ENCODE measurements at regions of chr6 and their contacts with region 1.

Region 1: GRCh38 chr6:11366183-11366933 is 133.9 kb upstream of the NEDD9 start:
- DNase-seq: no peak
- H3K4me3 ChIP-seq: no peak overlapping the region
- H3K27ac ChIP-seq: peak overlapping the region; percentile 74 to 80
- H3K4me1 ChIP-seq: no peaks in the 10 kb centered on the region
- H3K27me3 ChIP-seq: no peaks in the 10 kb centered on the region
- CTCF ChIP-seq: no peak
- POLR2A ChIP-seq: no peak

Region 2: GRCh38 chr6:11033825-11034224 is 332.5 kb before region 1 on chr6:
- intact Hi-C with region 1: no loop called
- DNase-seq: no peak
- H3K4me3 ChIP-seq: no peak overlapping the region
- H3K27ac ChIP-seq: no peak overlapping the region
- H3K4me1 ChIP-seq: no peaks in the 10 kb centered on the region
- H3K27me3 ChIP-seq: no peaks in the 10 kb centered on the region
- CTCF ChIP-seq: no peak
- POLR2A ChIP-seq: no peak

Region 3: DNA sequence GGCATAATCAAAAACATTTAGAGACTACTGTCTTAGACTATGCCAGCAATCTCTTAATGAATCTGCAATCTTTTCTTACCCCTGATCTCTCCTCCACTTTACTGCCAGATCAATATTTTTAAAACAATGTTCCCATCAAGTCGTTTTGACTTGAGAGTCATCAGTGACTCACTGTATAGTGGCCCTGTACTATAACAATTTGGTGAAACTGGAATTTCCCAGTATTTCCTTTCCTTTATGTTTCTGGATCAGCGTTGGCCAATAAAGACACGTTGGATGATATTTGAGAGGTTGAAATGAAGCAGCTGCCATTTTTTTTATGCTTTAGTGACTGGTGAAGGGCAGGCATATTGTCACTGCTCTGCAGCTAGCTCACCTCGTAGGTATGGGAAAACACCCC is 282.9 kb before region 1 on chr6:
- intact Hi-C with region 1: no loop called
- DNase-seq: no peak
- H3K4me3 ChIP-seq: no peak overlapping the region
- H3K27ac ChIP-seq: no peak overlapping the region
- H3K4me1 ChIP-seq: no peaks in the 10 kb centered on the region
- H3K27me3 ChIP-seq: no peaks in the 10 kb centered on the region
- CTCF ChIP-seq: no peak
- POLR2A ChIP-seq: no peak

Region 4: GRCh38 chr6:11232193-11232769 is 134.1 kb before region 1 on chr6 and contains the start of gene NEDD9:
- intact Hi-C with region 1: loop called (anchors 5 kb)
- DNase-seq: peak; percentile 99
- H3K4me3 ChIP-seq: peak within 1 kb of the TSS; percentile 53 to 59
- H3K27ac ChIP-seq: peak within 1 kb of the TSS; percentile 86 to 94
- H3K4me1 ChIP-seq: no peaks in the 10 kb centered on the region
- H3K27me3 ChIP-seq: no peaks in the 10 kb centered on the region
- CTCF ChIP-seq: peak in 1 of 4 experiments; percentile 11
- POLR2A ChIP-seq: peak; percentile 100
- total RNA-seq, gene NEDD9: 51.1 to 72.1 TPM

Region 5: GRCh38 chr6:11277275-11278206 is 88.8 kb before region 1 on chr6:
- intact Hi-C with region 1: loop called (anchors 5 kb)
- DNase-seq: peak; percentile 46
- H3K4me3 ChIP-seq: no peak overlapping the region
- H3K27ac ChIP-seq: peak overlapping the region; percentile 6 to 46
- H3K4me1 ChIP-seq: peaks cover 12% of the 10 kb centered on the region
- H3K27me3 ChIP-seq: no peaks in the 10 kb centered on the region
- CTCF ChIP-seq: no peak
- POLR2A ChIP-seq: no peak

Region 6: DNA sequence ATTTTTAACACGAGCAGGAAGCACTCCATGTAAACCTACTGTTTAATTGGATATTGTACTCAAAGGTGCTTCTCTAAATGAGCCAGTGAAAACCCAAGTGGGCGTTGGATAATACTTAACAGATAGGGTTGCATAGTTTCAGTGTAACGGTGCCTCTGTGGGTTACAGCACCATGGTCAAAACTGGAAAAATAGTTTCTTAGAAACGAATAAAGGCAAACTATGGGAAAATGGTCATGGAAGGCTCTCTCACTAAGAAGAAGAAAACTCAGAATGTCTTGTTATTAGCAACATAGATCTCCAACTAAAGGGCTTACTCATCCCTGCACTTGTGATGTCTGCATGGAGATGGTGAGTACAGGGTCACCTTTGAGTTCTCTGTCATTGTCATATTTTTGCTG is 74.8 kb before region 1 on chr6:
- intact Hi-C with region 1: loop called (anchors 5 kb)
- DNase-seq: no peak
- H3K4me3 ChIP-seq: no peak overlapping the region
- H3K27ac ChIP-seq: peak overlapping the region in 1 of 2 donors; percentile 34
- H3K4me1 ChIP-seq: no peaks in the 10 kb centered on the region
- H3K27me3 ChIP-seq: no peaks in the 10 kb centered on the region
- CTCF ChIP-seq: no peak
- POLR2A ChIP-seq: no peak

Region 7: DNA sequence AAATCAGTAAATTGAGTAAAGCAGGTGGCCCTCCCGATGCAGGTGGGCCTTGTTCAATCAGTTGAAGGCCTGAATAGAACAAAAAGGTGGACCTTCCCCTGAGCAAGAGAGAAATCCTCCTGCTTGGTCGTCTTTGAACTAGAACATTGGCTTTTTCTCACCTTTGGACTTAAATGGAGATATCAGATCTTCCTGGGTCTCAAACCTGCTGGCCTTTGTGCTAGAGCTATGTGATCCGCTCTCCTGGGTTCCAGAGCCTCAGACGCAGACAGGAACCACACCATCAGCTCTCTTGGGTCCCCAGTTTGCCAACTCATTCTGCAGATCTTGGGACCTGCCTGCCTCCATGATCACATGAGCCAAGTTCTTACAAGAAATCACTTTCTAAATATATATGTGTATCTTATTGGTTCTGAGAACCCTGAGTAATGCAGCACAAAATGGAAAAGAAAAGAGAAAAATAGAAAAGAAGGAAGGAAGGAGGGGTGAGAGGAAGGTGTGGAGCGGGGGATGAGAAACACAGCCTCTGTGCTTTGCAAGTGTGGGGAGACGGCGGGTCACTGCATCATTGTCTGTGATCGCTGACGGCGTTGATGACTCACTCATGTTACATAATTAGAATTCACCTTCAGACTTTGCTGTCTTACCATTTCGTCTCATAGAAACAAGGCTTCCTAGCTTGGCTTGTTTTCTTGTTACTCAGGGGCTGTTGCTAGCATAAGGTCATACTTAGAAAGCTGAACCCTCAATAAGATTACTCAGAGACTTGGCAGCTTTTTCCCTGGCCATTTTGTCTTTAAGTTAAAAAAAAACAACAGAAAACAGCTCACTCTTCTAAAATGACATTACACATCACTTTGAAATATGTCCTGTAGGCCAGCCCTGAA is 48.2 kb before region 1 on chr6:
- intact Hi-C with region 1: loop called (anchors 5 kb)
- DNase-seq: no peak
- H3K4me3 ChIP-seq: no peak overlapping the region
- H3K27ac ChIP-seq: peak overlapping the region; percentile 48 to 60
- H3K4me1 ChIP-seq: no peaks in the 10 kb centered on the region
- H3K27me3 ChIP-seq: no peaks in the 10 kb centered on the region
- CTCF ChIP-seq: no peak
- POLR2A ChIP-seq: no peak

Region 8: GRCh38 chr6:11485271-11485670 is 118.9 kb after region 1 on chr6:
- intact Hi-C with region 1: loop called (anchors 10 kb)
- DNase-seq: no peak
- H3K4me3 ChIP-seq: no peak overlapping the region
- H3K27ac ChIP-seq: no peak overlapping the region
- H3K4me1 ChIP-seq: no peaks in the 10 kb centered on the region
- H3K27me3 ChIP-seq: no peaks in the 10 kb centered on the region
- CTCF ChIP-seq: no peak
- POLR2A ChIP-seq: no peak